H1 (cell line): ENCODE measurements at regions of chr17 and their contacts with region 1.

Region 1: GRCh38 chr17:14813649-14814365 is 451.3 kb downstream of the PMP22 start:
- DNase-seq: peak; percentile 73 to 82
- H3K4me3 ChIP-seq: no peak overlapping the region
- H3K27ac ChIP-seq: no peak overlapping the region
- H3K4me1 ChIP-seq: no peaks in the 10 kb centered on the region
- H3K27me3 ChIP-seq: no peaks in the 10 kb centered on the region
- CTCF ChIP-seq: peak; percentile 61 to 71 (median 62)
- EP300 ChIP-seq: no peak
- POLR2A ChIP-seq: no peak
- RAD21 ChIP-seq: peak; percentile 65 to 76

Region 2: GRCh38 chr17:14826358-14826757 is 12.6 kb after region 1 on chr17:
- CTCF ChIA-PET with region 1: interaction called, 12 read pairs
- POLR2A ChIA-PET with region 1: no interaction called
- DNase-seq: no peak
- H3K4me3 ChIP-seq: no peak overlapping the region
- H3K27ac ChIP-seq: no peak overlapping the region
- H3K4me1 ChIP-seq: no peaks in the 10 kb centered on the region
- H3K27me3 ChIP-seq: peaks cover 0 to 1% (median 0%) of the 10 kb centered on the region in 4 experiments; a peak in 1 of 7 replicates
- CTCF ChIP-seq: no peak
- EP300 ChIP-seq: no peak
- POLR2A ChIP-seq: no peak
- RAD21 ChIP-seq: no peak

Region 3: GRCh38 chr17:14833201-14833785 is 19.5 kb after region 1 on chr17:
- CTCF ChIA-PET with region 1: interaction called, 12 read pairs
- POLR2A ChIA-PET with region 1: no interaction called
- DNase-seq: no peak
- H3K4me3 ChIP-seq: no peak overlapping the region
- H3K27ac ChIP-seq: no peak overlapping the region
- H3K4me1 ChIP-seq: no peaks in the 10 kb centered on the region
- H3K27me3 ChIP-seq: peaks cover 0 to 1% (median 0%) of the 10 kb centered on the region in 4 experiments; a peak in 1 of 7 replicates
- CTCF ChIP-seq: no peak
- EP300 ChIP-seq: no peak
- POLR2A ChIP-seq: no peak
- RAD21 ChIP-seq: no peak